ENCODE measurements at regions of chr11 and their contacts with region 1.

Region 1: GRCh38 chr11:13343931-13344717 is 66.5 kb downstream of the BMAL1 start:
- DNase-seq: peak; percentile 73
- H3K4me3 ChIP-seq: no peak overlapping the region; a peak in 1 of 4 replicates
- H3K27ac ChIP-seq: no peak overlapping the region
- H3K4me1 ChIP-seq: peaks cover 3 to 5% of the 10 kb centered on the region in 2 experiments; a peak in 3 of 4 replicates
- H3K27me3 ChIP-seq: no peaks in the 10 kb centered on the region
- CTCF ChIP-seq: peak; percentile 85
- EP300 ChIP-seq: no peak
- RAD21 ChIP-seq: peak; percentile 90

Region 2: GRCh38 chr11:13289081-13289480 is 55.0 kb before region 1 on chr11:
- CTCF ChIA-PET with region 1: interaction called, 14 read pairs
- POLR2A ChIA-PET with region 1: no interaction called
- DNase-seq: peak; percentile 38
- H3K4me3 ChIP-seq: no peak overlapping the region
- H3K27ac ChIP-seq: peak overlapping the region; percentile 38 to 80
- H3K4me1 ChIP-seq: peaks cover 4 to 14% of the 10 kb centered on the region in 2 experiments; a peak in 3 of 4 replicates
- H3K27me3 ChIP-seq: no peaks in the 10 kb centered on the region
- CTCF ChIP-seq: peak; percentile 33
- EP300 ChIP-seq: no peak
- RAD21 ChIP-seq: peak; percentile 62

Region 3: GRCh38 chr11:13354335-13354734 is 10.2 kb after region 1 on chr11:
- CTCF ChIA-PET with region 1: interaction called, 38 read pairs
- POLR2A ChIA-PET with region 1: no interaction called
- DNase-seq: no peak
- H3K4me3 ChIP-seq: no peak overlapping the region
- H3K27ac ChIP-seq: no peak overlapping the region
- H3K4me1 ChIP-seq: no peaks in the 10 kb centered on the region; a peak in 1 of 4 replicates
- H3K27me3 ChIP-seq: no peaks in the 10 kb centered on the region
- CTCF ChIP-seq: peak; percentile 43; the same call in 1 of the 2 replicates
- EP300 ChIP-seq: no peak
- RAD21 ChIP-seq: peak; percentile 15; the same call in 1 of the 2 replicates

Region 4: DNA sequence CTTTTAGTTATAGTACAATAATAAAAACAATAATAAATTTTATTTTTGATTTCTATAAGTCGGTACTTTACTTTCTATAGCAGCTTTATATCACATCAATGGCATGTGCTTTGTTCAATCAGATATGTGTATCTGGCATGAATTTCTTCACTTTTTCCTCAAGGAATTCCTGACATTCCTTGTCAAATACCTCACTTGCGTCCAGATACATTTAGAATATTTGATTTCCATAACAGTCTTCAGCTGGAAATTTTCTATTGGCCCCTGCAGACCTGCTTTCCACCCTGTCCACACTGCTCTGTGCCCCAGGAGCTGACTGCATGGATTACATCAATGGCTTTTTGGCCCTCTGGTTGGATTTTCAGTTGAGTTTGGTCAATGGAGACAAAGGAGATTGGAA is 417.6 kb after region 1 on chr11:
- CTCF ChIA-PET with region 1: no interaction called
- POLR2A ChIA-PET with region 1: no interaction called
- DNase-seq: no peak
- H3K4me3 ChIP-seq: no peak overlapping the region
- H3K27ac ChIP-seq: no peak overlapping the region
- H3K4me1 ChIP-seq: no peaks in the 10 kb centered on the region
- H3K27me3 ChIP-seq: no peaks in the 10 kb centered on the region
- CTCF ChIP-seq: no peak
- EP300 ChIP-seq: no peak
- RAD21 ChIP-seq: no peak